Activated T-helper 2 cell treated with anti-CD3 and anti-CD28 coated beads, Interferon-gamma antibody, Interleukin-2, Interleukin-4, amounts not matched to agents 10 μg/mL and 5 μg/mL and 100 μg/mL, durations not matched to agents 14 hours and 24 hours and 36 hours (primary cell): ENCODE measurements at regions of chr10 and their contacts with region 1.

Region 1: DNA sequence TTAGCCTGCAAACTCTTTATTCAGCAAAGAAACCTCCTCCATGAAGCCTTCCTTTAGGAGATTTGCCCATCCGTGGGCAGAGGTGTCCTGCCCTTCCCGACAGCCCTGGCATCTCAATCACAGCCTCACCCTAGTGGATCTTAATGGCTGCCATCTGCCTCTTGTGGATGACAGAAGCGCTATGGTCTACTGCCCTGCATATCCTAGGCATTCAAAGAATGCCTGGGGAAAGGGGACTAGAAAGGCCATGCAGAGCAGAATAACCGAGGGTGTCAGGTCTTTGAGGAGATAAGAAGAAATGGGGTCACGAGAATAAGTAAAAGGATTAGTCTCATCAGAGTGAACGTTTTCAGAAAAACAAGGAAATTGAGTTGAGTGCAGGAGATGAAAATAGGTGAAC is 57.7 kb upstream of the SPOCK2 start:
- DNase-seq: no peak
- H3K4me3 Mint-ChIP-seq: no peak overlapping the region
- H3K27ac Mint-ChIP-seq: no peak overlapping the region
- H3K4me1 Mint-ChIP-seq: peaks cover 26% of the 10 kb centered on the region
- H3K27me3 Mint-ChIP-seq: no peaks in the 10 kb centered on the region

Region 2: DNA sequence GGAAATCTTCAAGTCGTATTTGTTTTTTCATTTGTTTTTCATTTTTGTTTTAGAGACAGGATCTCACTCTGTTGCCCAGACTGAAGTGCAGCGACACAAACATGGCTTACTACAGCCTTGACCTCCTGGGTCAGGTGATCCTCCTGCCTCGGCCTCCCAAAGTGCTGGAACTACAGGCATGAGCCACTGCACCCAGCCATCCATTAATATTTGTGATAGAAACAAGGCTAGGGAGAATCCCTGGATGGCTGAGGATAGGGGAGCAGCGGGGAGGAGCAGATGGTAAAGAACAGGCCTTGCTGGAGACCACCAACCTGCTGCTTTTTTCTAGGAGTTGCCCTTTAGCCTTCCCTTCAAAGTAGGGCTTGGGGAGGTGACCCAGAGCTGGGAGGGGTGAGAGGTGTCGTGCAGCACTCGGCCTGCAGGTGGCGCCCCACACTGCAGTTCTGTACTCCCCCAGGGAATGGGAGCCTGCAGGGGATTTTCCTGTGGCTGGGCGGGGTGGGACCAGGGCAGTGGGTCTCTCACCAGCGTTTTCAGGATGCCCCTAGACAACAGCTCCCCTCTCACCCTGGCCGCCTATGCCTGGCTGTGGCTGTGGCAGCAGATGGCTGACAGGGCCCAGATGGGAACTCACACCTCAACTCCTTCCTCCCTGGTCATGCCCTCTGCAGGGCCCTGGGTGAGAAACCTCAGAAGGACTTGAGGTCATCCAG is 761.9 kb before region 1 on chr10:
- intact Hi-C with region 1: no loop called
- DNase-seq: peak; percentile 64
- H3K4me3 Mint-ChIP-seq: no peak overlapping the region
- H3K27ac Mint-ChIP-seq: no peak overlapping the region
- H3K4me1 Mint-ChIP-seq: no peaks in the 10 kb centered on the region
- H3K27me3 Mint-ChIP-seq: peaks cover 18% of the 10 kb centered on the region

Region 3: DNA sequence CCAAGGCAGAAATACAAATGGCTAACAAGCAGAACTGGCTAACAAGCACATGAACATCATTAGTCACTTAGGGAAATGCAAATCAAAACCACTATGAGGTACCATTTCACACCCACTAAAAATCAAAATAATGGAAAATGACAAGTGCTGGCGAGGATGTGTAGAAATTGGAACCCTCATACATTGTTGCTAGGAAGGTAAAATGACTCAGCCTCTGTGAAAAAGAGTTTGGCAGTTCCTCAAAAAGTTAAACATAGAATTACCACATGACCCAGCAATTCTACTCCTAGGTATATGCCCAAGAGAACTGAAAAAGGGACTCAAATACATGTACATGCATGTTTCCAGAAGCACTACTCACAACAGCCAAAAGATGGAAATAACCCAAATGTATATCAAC is 16.9 kb after region 1 on chr10:
- intact Hi-C with region 1: loop called (anchors 1 kb)
- DNase-seq: no peak
- H3K4me3 Mint-ChIP-seq: no peak overlapping the region
- H3K27ac Mint-ChIP-seq: peak overlapping the region; percentile 76
- H3K4me1 Mint-ChIP-seq: peaks cover 28% of the 10 kb centered on the region
- H3K27me3 Mint-ChIP-seq: no peaks in the 10 kb centered on the region

Region 4: GRCh38 chr10:72364239-72364777 is 218.2 kb after region 1 on chr10:
- intact Hi-C with region 1: no loop called
- DNase-seq: peak; percentile 79
- H3K4me3 Mint-ChIP-seq: no peak overlapping the region
- H3K27ac Mint-ChIP-seq: peak overlapping the region; percentile 40
- H3K4me1 Mint-ChIP-seq: peaks cover 19% of the 10 kb centered on the region
- H3K27me3 Mint-ChIP-seq: peaks cover 2% of the 10 kb centered on the region